ENCODE measurements at regions of chr20 and their contacts with region 1.

Region 1: GRCh38 chr20:50450881-50451752 is 59.1 kb upstream of the PTPN1 start:
- DNase-seq: peak; percentile 82
- H3K4me3 Mint-ChIP-seq: peak overlapping the region; percentile 53
- H3K27ac Mint-ChIP-seq: peak overlapping the region; percentile 66
- H3K4me1 Mint-ChIP-seq: peaks cover 28% of the 10 kb centered on the region
- H3K27me3 Mint-ChIP-seq: no peaks in the 10 kb centered on the region
- CTCF ChIP-seq: no peak

Region 2: DNA sequence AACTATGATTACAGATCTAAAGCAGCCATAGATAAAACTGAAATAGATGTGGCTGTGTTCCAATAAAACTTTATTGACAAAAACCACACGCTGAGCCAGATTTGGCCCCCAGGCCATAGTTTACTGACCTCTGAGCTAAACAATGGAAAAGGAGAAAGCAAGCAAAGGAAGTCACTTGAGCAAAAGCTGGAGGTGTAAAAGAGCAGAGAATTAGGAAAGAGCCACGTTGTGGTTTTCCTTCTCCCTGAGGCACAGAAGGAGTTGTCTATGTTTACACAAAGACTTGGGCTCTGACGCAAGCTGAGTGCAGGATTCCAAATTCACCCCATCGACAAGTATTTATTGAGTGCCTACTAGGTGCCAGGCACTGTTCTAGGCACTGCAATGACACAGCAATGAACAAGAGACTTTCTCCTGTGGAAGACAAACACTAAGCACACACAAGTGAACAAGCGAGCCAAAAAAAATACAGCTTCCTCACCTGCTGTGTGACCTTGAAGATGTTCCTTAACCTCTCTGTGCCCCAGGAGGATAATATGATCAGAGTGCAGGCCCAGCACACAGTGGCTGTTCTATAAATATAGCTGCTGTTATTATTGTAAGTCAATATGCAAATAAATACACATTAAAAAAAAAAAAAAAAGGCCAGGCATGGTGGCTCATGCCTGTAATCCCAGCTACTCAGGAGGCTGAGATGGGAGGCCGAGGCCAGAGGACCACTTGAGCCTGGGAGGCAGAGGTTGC is 16.3 kb before region 1 on chr20:
- CTCF ChIA-PET with region 1: interaction called, 4 read pairs
- POLR2A ChIA-PET with region 1: interaction called, 21 read pairs
- intact Hi-C with region 1: no loop called
- DNase-seq: peak; percentile 98
- H3K4me3 Mint-ChIP-seq: no peak overlapping the region
- H3K27ac Mint-ChIP-seq: peak overlapping the region; percentile 94
- H3K4me1 Mint-ChIP-seq: peaks cover 46% of the 10 kb centered on the region
- H3K27me3 Mint-ChIP-seq: no peaks in the 10 kb centered on the region
- CTCF ChIP-seq: no peak

Region 3: GRCh38 chr20:50475681-50476292 is 24.7 kb after region 1 on chr20:
- CTCF ChIA-PET with region 1: no interaction called
- POLR2A ChIA-PET with region 1: no interaction called
- intact Hi-C with region 1: no loop called
- DNase-seq: peak; percentile 54
- H3K4me3 Mint-ChIP-seq: no peak overlapping the region
- H3K27ac Mint-ChIP-seq: no peak overlapping the region
- H3K4me1 Mint-ChIP-seq: peaks cover 6% of the 10 kb centered on the region
- H3K27me3 Mint-ChIP-seq: no peaks in the 10 kb centered on the region
- CTCF ChIP-seq: no peak

Region 4: GRCh38 chr20:50575847-50576720 is 125.0 kb after region 1 on chr20:
- CTCF ChIA-PET with region 1: no interaction called
- POLR2A ChIA-PET with region 1: no interaction called
- intact Hi-C with region 1: no loop called
- DNase-seq: peak; percentile 63
- H3K4me3 Mint-ChIP-seq: no peak overlapping the region
- H3K27ac Mint-ChIP-seq: no peak overlapping the region
- H3K4me1 Mint-ChIP-seq: peaks cover 21% of the 10 kb centered on the region
- H3K27me3 Mint-ChIP-seq: no peaks in the 10 kb centered on the region
- CTCF ChIP-seq: peak; percentile 56